Activated CD8-positive, alpha-beta T cell treated with anti-CD3 and anti-CD28 coated beads for 36 hours (primary cell): ENCODE measurements at regions of chr1 and their contacts with region 1.

Region 1: GRCh38 chr1:7808253-7808844 is 24.3 kb downstream of the PER3 start:
- DNase-seq: no peak
- ATAC-seq: peak; percentile 66
- H3K4me3 Mint-ChIP-seq: no peak overlapping the region
- H3K27ac Mint-ChIP-seq: no peak overlapping the region
- H3K4me1 Mint-ChIP-seq: no peaks in the 10 kb centered on the region
- H3K27me3 Mint-ChIP-seq: no peaks in the 10 kb centered on the region
- CTCF ChIP-seq: peak; percentile 75

Region 2: DNA sequence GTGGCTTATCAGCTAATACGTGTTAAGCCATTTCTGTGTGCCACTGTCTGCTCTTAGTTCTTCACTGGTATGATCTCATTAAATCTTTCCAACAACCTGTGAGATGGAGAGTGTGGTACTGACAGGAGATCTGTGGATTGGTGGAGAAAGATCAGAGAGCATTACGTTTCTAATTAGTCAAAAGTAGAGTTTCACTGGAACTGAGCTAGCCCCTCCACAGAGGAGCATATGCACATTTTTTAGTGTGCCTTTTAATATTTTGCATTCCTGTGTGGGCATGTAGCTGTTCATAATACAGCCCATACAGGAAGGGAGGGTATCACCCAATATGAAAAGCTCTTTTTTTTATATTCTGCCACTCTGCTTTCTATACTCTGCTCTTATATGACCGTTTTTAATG is 12.9 kb after region 1 on chr1:
- CTCF ChIA-PET with region 1: interaction called, 10 read pairs
- POLR2A ChIA-PET with region 1: no interaction called
- intact Hi-C with region 1: no loop called
- DNase-seq: no peak
- ATAC-seq: no peak
- H3K4me3 Mint-ChIP-seq: no peak overlapping the region
- H3K27ac Mint-ChIP-seq: no peak overlapping the region
- H3K4me1 Mint-ChIP-seq: no peaks in the 10 kb centered on the region
- H3K27me3 Mint-ChIP-seq: no peaks in the 10 kb centered on the region
- CTCF ChIP-seq: no peak

Region 3: GRCh38 chr1:7893529-7894180 is 85.3 kb after region 1 on chr1:
- CTCF ChIA-PET with region 1: interaction called, 3 read pairs
- POLR2A ChIA-PET with region 1: no interaction called
- intact Hi-C with region 1: loop called (anchors 10 kb)
- DNase-seq: no peak
- ATAC-seq: no peak
- H3K4me3 Mint-ChIP-seq: no peak overlapping the region
- H3K27ac Mint-ChIP-seq: no peak overlapping the region
- H3K4me1 Mint-ChIP-seq: peaks cover 3% of the 10 kb centered on the region
- H3K27me3 Mint-ChIP-seq: no peaks in the 10 kb centered on the region
- CTCF ChIP-seq: no peak

Region 4: DNA sequence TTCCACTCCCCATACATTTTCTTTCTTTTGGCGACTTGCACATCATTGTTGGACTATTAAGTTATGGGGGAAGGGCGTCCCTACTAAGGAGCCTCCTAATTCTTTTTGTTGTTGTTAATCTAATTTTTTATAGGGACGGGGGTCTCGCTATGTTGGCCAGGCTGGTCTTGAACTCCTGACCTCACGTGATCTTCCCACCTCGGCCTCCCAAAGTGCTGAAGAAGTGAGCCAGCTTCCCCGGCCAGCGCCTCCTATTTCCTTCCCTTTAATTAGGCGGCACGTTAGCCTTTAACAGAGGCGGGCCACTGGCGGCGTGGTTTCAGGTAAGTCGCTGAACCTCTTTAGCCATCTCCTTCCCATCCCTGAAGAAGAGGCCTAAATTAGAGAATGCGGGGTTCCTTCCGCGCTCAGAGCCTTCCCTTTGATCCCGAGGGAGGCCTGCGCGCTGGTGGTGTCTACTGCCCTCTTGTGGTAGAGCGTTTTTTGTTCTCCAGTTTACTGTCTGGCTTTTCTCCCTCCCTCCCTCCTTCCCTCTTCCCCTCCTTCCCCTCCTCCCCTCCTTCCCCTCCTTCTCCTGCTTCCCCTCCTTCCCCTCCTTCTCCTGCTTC is 94.2 kb after region 1 on chr1:
- CTCF ChIA-PET with region 1: interaction called, 13 read pairs
- POLR2A ChIA-PET with region 1: no interaction called
- intact Hi-C with region 1: loop called (anchors 10 kb)
- DNase-seq: peak; percentile 68
- ATAC-seq: peak; percentile 75
- H3K4me3 Mint-ChIP-seq: peak overlapping the region; percentile 38
- H3K27ac Mint-ChIP-seq: no peak overlapping the region
- H3K4me1 Mint-ChIP-seq: peaks cover 16% of the 10 kb centered on the region
- H3K27me3 Mint-ChIP-seq: no peaks in the 10 kb centered on the region
- CTCF ChIP-seq: peak; percentile 80